Lower leg skin (tissue), 4 donors: ENCODE measurements at regions of chr18 and their contacts with region 1.

Region 1: DNA sequence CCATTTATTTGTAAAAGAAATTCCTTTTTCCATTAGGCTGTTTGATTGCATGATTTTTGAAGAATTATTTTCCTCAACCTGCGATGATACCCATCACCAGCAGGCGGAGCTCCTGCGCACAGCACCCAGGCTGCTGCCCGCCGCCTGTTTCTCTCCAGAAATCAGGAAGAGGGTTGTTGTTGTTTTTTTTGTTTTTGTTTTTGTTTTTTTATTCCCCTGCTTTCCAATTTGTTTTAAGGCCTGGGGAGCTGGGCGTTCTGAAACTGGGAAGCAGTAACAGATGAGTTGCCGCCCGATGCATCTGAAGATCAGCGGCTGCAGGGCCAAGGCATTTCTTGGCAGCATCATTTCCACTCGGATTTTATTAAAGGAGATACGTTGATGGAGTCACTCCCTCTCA is 132.1 kb downstream of the MBP start:
- DNase-seq: peak in 1 of 2 donors; percentile 94
- H3K4me3 ChIP-seq: no peak overlapping the region
- CTCF ChIP-seq: peak in 1 of 3 donors; percentile 95
- POLR2A ChIP-seq: no peak

Region 2: DNA sequence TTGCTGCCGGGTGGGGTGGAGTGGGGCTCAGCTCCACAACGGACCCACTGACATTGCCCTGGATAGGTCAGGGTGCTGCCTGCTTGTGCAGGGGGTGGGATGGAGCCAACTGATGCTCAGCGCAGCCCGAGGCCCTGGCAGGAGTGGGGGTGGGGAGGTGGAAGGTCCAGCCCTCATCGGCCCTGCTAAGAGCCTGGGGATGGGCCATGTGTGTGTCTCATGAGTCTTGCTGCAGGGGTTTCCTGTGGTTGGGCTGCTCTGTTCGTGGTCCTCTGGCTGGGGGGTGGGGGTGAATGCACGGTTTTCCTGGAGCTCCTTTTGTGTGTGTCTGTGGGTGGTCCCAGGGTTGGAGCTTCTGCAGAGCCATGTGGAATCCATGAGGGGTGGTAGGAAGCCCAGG is 209.7 kb after region 1 on chr18:
- intact Hi-C with region 1: loop called (anchors 5 kb)
- DNase-seq: no peak
- H3K4me3 ChIP-seq: no peak overlapping the region
- CTCF ChIP-seq: no peak
- POLR2A ChIP-seq: no peak